H1 (cell line): ENCODE measurements at regions of chr1 and their contacts with region 1.

Region 1: DNA sequence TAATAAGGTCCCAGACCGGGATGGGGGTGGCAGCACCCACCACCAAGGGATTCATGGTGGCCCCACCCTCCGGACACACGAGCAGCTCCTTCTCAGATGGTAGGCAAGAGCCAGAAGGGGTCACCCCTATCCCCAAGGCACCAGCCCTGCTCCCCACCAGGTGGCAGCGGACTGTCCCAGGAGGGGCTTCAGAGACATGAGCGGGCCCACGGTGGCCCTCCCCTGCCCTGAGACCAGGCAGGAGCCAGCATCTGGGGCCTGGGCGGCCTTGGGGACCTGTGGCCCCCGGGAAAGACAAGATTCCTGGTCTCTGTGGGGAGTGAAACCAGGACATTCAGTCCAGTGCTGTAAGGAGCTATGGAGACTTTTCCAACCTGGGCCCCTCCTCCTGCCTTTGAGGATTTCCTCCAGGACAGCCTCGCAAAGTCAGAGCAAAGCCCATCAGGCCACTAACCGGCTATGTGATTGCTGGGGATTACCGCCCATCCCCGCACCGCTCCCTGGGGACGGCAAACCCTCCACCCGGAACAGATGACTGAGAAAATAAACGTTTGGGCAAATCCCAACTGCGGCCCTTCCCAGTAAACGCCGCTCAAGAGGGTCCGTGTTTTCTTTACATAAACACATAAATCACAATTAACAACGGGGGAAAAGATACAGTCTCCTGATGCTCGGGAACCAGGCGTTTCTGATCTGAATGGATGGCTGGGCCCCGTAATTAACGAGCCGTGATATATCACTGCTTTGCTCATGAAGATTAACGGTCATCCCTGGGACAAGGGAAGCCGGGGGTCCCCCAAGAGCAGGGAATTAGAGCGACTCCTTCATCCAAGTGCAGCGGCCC is 50.9 kb upstream of the ARHGEF16 start:
- DNase-seq: peak; percentile 25 to 75
- H3K4me3 ChIP-seq: no peak overlapping the region
- H3K27ac ChIP-seq: no peak overlapping the region
- H3K4me1 ChIP-seq: no peaks in the 10 kb centered on the region
- H3K27me3 ChIP-seq: no peaks in the 10 kb centered on the region
- CTCF ChIP-seq: peak in 2 of 3 experiments; percentile 62 to 80; a peak in 3 of 4 replicates
- EP300 ChIP-seq: no peak
- POLR2A ChIP-seq: no peak
- RAD21 ChIP-seq: peak; percentile 30 to 45

Region 2: GRCh38 chr1:3417082-3417739 is 13.6 kb after region 1 on chr1:
- CTCF ChIA-PET with region 1: interaction called, 20 read pairs
- POLR2A ChIA-PET with region 1: interaction called, 3 read pairs
- DNase-seq: no peak
- H3K4me3 ChIP-seq: no peak overlapping the region
- H3K27ac ChIP-seq: no peak overlapping the region
- H3K4me1 ChIP-seq: no peaks in the 10 kb centered on the region; a peak in 1 of 7 replicates
- H3K27me3 ChIP-seq: no peaks in the 10 kb centered on the region
- CTCF ChIP-seq: peak in 2 of 3 experiments; percentile 41 to 45; a peak in 3 of 4 replicates
- EP300 ChIP-seq: no peak
- POLR2A ChIP-seq: no peak
- RAD21 ChIP-seq: no peak; a peak in 1 of 4 replicates

Region 3: GRCh38 chr1:3423245-3423829 is 19.7 kb after region 1 on chr1:
- CTCF ChIA-PET with region 1: interaction called, 20 read pairs
- POLR2A ChIA-PET with region 1: interaction called, 3 read pairs
- DNase-seq: no peak
- H3K4me3 ChIP-seq: no peak overlapping the region
- H3K27ac ChIP-seq: no peak overlapping the region
- H3K4me1 ChIP-seq: peaks cover 0 to 2% (median 0%) of the 10 kb centered on the region in 4 experiments; a peak in 1 of 7 replicates
- H3K27me3 ChIP-seq: no peaks in the 10 kb centered on the region
- CTCF ChIP-seq: no peak
- EP300 ChIP-seq: no peak
- POLR2A ChIP-seq: no peak
- RAD21 ChIP-seq: no peak